ENCODE measurements at regions of chr19 and their contacts with region 1.

Region 1: DNA sequence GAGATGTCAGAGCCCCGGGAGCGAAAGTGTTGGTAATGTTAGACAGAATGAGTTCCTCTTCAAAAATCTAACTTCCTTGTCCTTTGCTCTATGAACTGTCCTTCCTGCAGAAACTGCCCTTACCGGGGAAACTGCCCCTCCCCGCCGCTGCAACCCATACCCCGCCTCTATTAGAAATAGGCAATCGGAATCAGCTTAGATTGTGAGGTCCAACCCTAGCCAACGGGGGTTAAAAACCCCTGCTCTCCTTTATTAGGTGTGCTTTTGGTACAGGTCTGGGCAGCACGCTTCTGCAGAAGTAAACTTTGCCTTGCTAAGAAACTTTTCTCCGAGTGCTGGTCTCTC is 11.5 kb upstream of the CAPNS1 start:
- DNase-seq: no peak
- H3K4me3 ChIP-seq: peak overlapping the region; percentile 66 to 88 (median 70)
- H3K27ac ChIP-seq: peak overlapping the region; percentile 54 to 81
- H3K4me1 ChIP-seq: peaks cover 0 to 20% (median 10%) of the 10 kb centered on the region in 4 experiments
- H3K27me3 ChIP-seq: no peaks in the 10 kb centered on the region

Region 2: DNA sequence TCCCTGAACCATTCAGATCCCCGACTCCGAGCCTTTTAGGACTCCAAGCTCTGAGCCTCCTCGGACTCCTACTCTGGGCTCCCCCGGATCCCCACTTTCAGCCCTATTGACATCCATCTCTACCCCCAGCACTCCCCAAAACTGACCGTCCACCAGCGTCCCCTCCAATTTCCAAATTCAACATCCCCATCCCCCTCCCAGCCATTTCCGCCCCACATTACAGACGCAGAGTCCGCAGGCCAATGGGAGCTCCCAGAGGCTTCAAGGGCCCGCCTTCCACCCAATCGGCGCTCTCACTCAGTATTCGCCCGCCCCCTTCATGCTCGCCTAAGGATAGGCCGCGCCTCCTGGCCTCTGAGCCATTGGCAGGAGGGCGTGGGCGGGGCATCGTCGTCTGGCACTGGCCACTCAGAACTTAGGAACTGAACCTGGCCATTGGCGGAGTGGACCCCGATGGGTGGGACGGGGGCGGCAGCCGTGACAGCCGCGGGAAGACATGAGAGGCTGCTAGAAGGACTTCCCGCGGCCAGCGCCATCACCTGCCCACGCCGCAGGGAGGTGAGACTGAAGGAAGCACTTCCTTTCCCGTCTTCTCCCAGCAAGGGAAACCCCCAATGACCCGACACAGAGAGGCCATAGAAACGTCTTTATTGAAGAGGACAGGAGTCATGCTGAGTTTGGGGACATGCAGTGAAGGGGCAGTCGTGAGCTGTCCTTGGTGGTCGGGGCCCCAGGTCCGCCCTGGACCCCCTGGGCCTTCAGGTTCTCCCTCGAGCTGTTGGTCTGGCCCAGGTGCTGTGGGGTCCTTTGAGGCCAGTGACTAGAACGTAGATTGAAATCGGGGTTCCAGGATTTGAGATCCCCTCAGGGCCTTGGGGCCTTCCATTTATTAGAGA is 114.1 kb before region 1 on chr19 and contains the start of gene ALKBH6:
- CTCF ChIA-PET with region 1: no interaction called
- POLR2A ChIA-PET with region 1: no interaction called
- DNase-seq: peak; percentile 96 to 99 (median 99)
- H3K4me3 ChIP-seq: peak within 1 kb of the TSS; percentile 70 to 96 (median 89)
- H3K27ac ChIP-seq: peak within 1 kb of the TSS; percentile 80 to 90
- H3K4me1 ChIP-seq: peaks cover 0 to 20% (median 15%) of the 10 kb centered on the region in 4 experiments
- H3K27me3 ChIP-seq: no peaks in the 10 kb centered on the region

Region 3: DNA sequence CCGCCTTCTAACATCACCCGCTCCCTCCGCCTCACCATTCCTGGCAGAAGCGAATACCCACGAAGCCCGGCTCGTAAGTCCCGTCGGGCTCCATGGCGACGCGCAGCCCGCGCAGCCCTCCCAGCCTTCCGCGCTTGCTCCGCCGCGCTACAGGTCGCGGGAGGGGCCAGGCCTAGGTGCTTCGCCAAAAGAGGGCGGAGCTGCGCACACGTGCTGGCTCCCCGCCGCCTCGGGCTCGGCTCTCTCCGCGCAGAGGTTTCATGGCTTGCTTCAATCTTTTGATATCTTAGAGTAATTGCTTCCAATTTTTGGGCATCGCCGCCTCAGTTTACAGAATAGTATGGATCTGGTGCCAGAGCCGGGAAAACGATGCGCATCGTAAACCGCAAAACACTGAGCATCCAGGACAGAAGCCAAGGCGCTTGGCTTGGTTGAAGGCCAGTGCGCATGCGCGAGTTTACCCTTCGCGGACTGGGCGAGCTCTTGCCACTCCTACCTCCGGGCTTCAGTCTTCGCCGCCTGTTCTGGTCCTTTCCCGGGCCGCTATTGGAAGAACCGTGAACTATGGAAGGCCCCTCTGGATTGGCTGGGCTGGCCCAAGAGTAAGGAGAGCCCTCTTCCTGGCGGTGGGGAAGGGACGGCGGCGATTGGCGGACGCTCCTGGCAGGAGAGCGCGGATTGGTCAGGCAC is 13.5 kb before region 1 on chr19 and contains the start of gene POLR2I:
- CTCF ChIA-PET with region 1: interaction called, 25 read pairs
- POLR2A ChIA-PET with region 1: no interaction called
- DNase-seq: peak; percentile 100
- H3K4me3 ChIP-seq: peak within 1 kb of the TSS; percentile 50 to 98 (median 90)
- H3K27ac ChIP-seq: peak within 1 kb of the TSS; percentile 76 to 89
- H3K4me1 ChIP-seq: peaks cover 0 to 25% (median 22%) of the 10 kb centered on the region in 4 experiments
- H3K27me3 ChIP-seq: no peaks in the 10 kb centered on the region

Region 4: DNA sequence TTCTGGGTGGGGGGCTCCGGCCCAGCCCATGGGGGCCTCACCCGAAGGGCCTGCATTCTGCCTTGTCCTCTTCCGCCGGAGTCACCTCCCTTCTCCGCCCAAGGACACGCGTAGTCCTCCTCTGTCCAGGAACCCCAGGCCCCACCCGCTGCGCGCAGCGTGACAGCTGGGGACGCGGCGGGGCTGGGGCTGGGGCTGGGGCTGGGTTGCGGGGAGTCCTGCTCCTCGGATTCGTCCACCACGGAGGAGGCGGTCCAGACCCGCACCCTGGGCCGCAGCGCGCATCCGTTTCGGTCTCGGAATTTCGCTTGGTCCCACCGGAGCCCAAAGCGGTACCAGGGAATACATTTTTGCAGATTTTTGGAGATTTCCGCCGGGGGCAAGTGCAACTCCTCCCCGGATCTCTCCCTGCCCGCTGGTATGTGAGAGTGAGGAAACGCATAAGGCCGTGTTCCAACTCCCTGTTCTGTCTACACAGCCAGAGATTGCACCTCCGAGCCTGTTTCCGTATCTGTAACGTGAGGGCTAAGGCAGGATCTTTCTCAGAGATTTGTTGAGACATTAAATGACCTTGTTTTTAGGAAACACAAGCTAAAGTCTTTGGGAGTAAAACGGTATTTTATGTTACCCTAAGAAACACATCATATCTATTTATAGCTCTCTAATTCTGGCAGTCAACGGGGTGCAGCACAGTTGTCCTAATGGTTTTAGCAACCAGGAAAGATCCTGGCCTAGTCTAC is 24.2 kb after region 1 on chr19 and contains the start of gene COX7A1:
- CTCF ChIA-PET with region 1: interaction called, 14 read pairs
- POLR2A ChIA-PET with region 1: no interaction called
- DNase-seq: peak in 2 of 3 donors; percentile 14 to 30
- H3K4me3 ChIP-seq: peak within 1 kb of the TSS in 5 of 7 experiments; percentile 42 to 75 (median 56)
- H3K27ac ChIP-seq: no peak within 1 kb of the TSS
- H3K4me1 ChIP-seq: peaks cover 0 to 10% (median 0%) of the 10 kb centered on the region in 4 experiments
- H3K27me3 ChIP-seq: no peaks in the 10 kb centered on the region

Region 5: DNA sequence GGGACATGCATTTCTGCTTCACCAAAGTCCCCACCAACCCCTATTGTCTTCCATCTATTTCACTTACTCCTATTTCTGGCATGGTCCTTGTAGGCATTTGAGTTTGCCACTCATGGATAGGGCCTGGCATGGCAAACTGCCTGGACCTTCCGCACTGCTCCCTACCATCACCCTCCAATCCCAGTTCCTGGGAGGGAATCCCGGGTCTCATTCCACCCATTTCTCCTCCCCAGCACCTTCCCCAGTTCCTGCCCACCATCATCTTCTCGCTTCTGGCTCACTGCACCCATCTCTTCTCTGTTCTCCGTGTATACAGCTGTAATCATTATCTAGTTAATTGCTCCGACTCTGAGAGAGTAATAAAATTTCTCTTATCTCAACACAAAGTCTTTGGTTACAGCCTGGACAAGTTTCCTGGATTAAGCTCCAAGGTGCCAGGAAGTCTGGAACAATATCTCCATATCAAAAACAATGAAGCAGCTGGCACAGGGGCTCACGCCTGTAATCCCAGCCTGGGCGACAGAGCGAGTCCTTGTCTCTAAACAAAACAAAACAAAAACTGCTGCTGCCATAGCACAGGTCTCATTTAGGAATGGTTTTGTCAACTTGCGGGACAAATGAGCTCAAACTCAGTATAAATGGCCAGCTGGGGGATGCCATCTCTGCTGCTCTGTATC is 40.9 kb after region 1 on chr19:
- CTCF ChIA-PET with region 1: interaction called, 56 read pairs
- POLR2A ChIA-PET with region 1: no interaction called
- DNase-seq: no peak
- H3K4me3 ChIP-seq: no peak overlapping the region
- H3K27ac ChIP-seq: no peak overlapping the region
- H3K4me1 ChIP-seq: peaks cover 0 to 3% (median 2%) of the 10 kb centered on the region in 4 experiments
- H3K27me3 ChIP-seq: no peaks in the 10 kb centered on the region

Region 6: GRCh38 chr19:36182612-36183244 is 54.4 kb after region 1 on chr19:
- CTCF ChIA-PET with region 1: interaction called, 11 read pairs
- POLR2A ChIA-PET with region 1: no interaction called
- DNase-seq: no peak
- H3K4me3 ChIP-seq: no peak overlapping the region
- H3K27ac ChIP-seq: no peak overlapping the region
- H3K4me1 ChIP-seq: no peaks in the 10 kb centered on the region
- H3K27me3 ChIP-seq: no peaks in the 10 kb centered on the region